Ovary (tissue), 10 donors: ENCODE measurements at regions of chr13 and their contacts with region 1.

Region 1: DNA sequence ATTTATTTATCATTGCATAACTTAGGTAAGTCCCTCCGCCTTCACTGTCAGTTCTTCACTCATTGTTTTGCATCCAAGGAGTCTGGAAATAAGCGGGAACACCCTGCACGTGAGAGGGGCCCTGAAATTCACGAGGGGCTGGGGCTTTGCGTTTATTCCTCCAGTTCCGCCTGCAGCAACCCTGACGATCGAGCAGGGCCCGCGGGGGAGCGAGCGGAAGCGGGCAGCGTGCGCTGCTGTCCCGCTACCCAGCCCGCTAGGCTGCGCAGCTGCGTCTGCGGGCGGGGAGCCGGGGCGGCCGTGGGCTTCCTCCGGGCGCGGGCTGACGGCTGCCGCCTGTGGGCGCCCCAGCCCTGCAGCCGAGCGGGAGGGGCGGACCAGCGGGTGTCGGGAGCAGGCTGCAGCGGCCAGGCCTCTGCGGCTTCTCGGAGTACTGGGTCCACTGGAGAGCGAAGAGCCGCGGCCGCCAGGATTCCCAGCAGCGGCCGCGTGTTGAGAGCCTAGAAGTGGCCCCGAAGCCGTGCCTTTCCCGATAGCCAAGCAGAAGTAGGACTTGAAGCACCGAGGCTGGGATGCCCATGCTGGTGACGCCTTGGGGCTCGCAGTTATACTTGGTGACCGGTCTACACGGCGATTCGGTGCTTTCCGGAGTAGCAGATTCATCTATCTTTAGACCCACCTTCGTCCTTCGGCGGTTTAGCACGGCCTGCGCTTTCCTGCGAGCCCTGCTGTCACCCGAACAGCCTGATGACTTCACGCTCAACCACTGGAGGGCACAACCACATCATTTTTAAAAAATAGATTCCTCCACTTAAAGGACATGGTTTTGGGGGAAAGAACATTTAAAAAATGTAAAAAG is 32.9 kb upstream of the SACS start:
- DNase-seq: peak; percentile 59 to 77 (median 73)
- H3K4me3 ChIP-seq: peak overlapping the region; percentile 33
- H3K27ac ChIP-seq: peak overlapping the region; percentile 18 to 79
- H3K4me1 ChIP-seq: no peaks in the 10 kb centered on the region
- H3K27me3 ChIP-seq: no peaks in the 10 kb centered on the region
- CTCF ChIP-seq: peak in 2 of 3 donors; percentile 44 to 62
- EP300 ChIP-seq: no peak
- POLR2A ChIP-seq: no peak

Region 2: DNA sequence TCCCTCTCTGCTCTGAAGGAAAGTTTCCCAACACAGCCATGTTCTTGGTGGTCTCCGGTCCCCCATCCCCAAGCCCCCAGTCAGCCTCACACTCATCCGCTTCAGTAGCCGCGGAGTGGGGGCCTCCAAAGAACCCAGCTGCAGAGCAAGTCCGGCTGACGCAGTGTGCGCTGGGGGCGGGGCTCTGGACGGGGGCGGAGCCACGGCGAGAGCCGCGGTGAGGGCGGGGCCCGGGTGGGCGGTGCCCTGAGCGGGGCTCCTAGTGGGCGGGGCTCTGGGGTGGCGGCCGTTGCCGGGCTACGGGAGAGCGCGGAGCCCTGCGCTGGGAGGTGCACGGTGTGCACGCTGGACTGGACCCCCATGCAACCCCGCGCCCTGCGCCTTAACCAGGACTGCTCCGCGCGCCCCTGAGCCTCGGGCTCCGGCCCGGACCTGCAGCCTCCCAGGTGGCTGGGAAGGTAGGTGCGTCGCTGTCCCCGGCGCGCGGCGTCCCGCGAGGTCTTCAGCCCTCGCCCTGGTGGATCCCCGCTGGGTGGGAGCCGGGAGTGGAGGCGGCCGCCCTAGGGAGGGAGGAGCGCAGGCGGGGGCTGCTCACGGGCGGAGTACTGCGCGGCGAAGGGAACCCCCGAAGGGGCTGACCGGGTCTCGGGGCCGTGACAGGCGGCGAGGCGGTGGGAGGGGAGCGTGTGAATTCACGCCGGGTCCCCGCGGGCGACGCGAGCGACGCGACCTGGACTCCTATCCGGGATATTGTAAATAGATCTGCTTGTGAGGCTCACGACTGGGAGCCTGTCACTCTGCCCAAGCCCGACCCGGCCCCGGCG is 112.9 kb after region 1 on chr13:
- intact Hi-C with region 1: loop called in 1 of 4 experiments (anchors 10 kb)
- DNase-seq: peak; percentile 91 to 96 (median 96)
- H3K4me3 ChIP-seq: peak overlapping the region; percentile 73
- H3K27ac ChIP-seq: peak overlapping the region; percentile 68 to 90
- H3K4me1 ChIP-seq: peaks cover 2% of the 10 kb centered on the region
- H3K27me3 ChIP-seq: no peaks in the 10 kb centered on the region
- CTCF ChIP-seq: no peak
- EP300 ChIP-seq: no peak
- POLR2A ChIP-seq: peak; percentile 42

Region 3: DNA sequence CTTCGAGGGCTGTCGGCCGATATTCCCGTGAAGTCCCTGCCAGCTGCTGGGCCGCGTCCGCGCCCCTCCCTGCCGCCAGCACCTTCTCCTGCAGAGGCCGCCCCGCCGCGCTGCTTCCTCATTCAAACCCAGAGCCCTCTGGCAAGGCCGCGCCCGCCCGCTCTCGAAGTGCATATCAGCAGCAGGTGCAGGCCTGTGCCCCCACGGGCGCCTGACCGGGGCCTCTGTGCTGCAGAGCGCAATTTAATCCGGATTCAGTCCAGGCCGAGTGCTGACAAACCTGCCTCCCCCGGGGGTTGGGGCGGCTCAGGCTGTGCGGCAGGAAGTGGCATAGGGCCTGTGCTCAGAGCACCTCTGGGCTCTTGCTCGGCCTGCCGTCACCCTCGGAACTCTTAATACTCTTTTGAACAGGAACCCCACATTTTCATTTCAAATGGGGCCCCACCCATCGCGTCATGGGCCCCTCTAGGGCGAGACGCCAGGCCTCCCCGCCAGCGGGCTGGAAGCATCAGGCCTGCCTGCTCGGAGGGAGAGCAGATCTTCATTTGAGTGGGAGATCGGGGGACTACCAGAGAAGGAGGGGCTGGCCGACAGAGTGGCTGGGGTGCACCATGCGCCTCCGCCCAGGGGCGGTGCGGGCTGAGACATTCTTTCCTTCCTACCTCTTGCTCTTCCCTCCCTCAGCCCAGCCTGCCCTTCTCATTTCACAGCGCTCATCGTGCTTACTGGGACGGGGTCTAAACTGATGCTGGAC is 229.5 kb after region 1 on chr13:
- intact Hi-C with region 1: loop called in 1 of 4 experiments (anchors 10 kb)
- DNase-seq: no peak
- H3K4me3 ChIP-seq: no peak overlapping the region
- H3K27ac ChIP-seq: no peak overlapping the region
- H3K4me1 ChIP-seq: no peaks in the 10 kb centered on the region
- H3K27me3 ChIP-seq: no peaks in the 10 kb centered on the region
- CTCF ChIP-seq: no peak
- EP300 ChIP-seq: no peak
- POLR2A ChIP-seq: no peak